ENCODE measurements at regions of chr6 and their contacts with region 1.

Region 1: GRCh38 chr6:161273752-161274487 is at the start of gene AGPAT4:
- DNase-seq: peak; percentile 95
- H3K4me3 ChIP-seq: peak within 1 kb of the TSS; percentile 67 to 85 (median 69)
- H3K27ac ChIP-seq: peak within 1 kb of the TSS; percentile 95
- H3K4me1 ChIP-seq: peaks cover 12% of the 10 kb centered on the region
- H3K27me3 ChIP-seq: no peaks in the 10 kb centered on the region
- CTCF ChIP-seq: no peak
- total RNA-seq, gene AGPAT4: 12.5 to 15.8 TPM

Region 2: DNA sequence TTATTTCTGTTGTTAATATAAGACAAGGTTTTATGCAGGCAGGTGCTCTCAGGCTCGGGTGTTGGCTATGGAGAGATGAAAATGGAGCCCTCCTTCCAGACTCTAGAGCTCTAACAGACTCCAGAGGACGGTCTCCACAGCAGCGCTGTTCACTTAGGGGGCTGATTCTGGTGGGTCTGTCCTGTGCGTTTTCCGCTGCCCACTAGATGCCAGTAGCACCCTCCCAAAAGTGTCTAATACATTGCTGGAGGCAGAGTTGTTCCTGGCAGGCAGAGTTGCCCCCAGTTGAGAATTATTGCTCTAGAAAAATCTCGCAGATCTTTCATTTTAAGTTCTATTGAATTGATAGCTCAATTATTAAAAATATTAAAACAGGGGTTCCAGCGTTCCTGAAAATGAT is 172.4 kb before region 1 on chr6:
- CTCF ChIA-PET with region 1: no interaction called
- dilution Hi-C with region 1: no loop called
- in situ Hi-C with region 1: no loop called
- intact Hi-C with region 1: loop called (anchors 5 kb)
- DNase-seq: no peak
- H3K4me3 ChIP-seq: no peak overlapping the region
- H3K27ac ChIP-seq: no peak overlapping the region
- H3K4me1 ChIP-seq: peaks cover 20% of the 10 kb centered on the region
- H3K27me3 ChIP-seq: no peaks in the 10 kb centered on the region
- CTCF ChIP-seq: no peak

Region 3: GRCh38 chr6:161168281-161168891 is 105.5 kb before region 1 on chr6:
- CTCF ChIA-PET with region 1: no interaction called
- dilution Hi-C with region 1: no loop called
- in situ Hi-C with region 1: no loop called
- intact Hi-C with region 1: loop called (anchors 10 kb)
- DNase-seq: peak; percentile 96
- H3K4me3 ChIP-seq: no peak overlapping the region
- H3K27ac ChIP-seq: no peak overlapping the region
- H3K4me1 ChIP-seq: peaks cover 14% of the 10 kb centered on the region
- H3K27me3 ChIP-seq: no peaks in the 10 kb centered on the region
- CTCF ChIP-seq: no peak

Region 4: DNA sequence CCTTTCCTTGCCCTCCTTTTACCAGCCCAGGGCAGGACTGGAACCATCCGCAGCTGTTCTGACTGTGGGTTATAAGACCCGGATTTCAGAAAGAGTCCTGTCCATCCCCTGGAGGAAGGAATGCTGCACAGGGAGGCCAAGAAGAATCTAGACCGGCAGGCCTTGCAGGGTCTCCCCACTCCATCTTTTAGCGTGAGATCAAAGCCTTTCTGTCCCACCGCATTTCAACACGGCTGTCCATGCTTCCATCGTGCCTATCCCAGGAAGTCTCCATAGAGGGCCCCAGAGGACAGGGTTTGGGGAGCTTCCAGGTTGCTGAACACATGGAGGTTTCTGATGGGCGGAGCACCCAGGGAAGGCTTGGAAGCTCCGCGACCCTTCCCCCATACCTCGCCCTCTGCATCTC is 79.3 kb after region 1 on chr6:
- CTCF ChIA-PET with region 1: no interaction called
- dilution Hi-C with region 1: no loop called
- in situ Hi-C with region 1: no loop called
- intact Hi-C with region 1: loop called (anchors 5 kb)
- DNase-seq: peak; percentile 13
- H3K4me3 ChIP-seq: no peak overlapping the region
- H3K27ac ChIP-seq: no peak overlapping the region
- H3K4me1 ChIP-seq: no peaks in the 10 kb centered on the region
- H3K27me3 ChIP-seq: no peaks in the 10 kb centered on the region
- CTCF ChIP-seq: peak in 1 of 2 donors; percentile 50